ENCODE measurements at regions of chr7 and their contacts with region 1.

Region 1: GRCh38 chr7:149624419-149625339 is 127.1 kb upstream of the ZNF746 start:
- DNase-seq: peak; percentile 89 to 92 (median 92)
- H3K4me3 ChIP-seq: peak overlapping the region; percentile 72 to 76
- H3K4me3 Mint-ChIP-seq: peak overlapping the region; percentile 85 to 97 (median 92)
- H3K27ac ChIP-seq: peak overlapping the region; percentile 66
- H3K27ac Mint-ChIP-seq: peak overlapping the region; percentile 77 to 96 (median 88)
- H3K4me1 ChIP-seq: peaks cover 41% of the 10 kb centered on the region
- H3K4me1 Mint-ChIP-seq: peaks cover 23 to 54% (median 36%) of the 10 kb centered on the region in 4 donors
- H3K27me3 ChIP-seq: peaks cover 4% of the 10 kb centered on the region
- H3K27me3 Mint-ChIP-seq: peaks cover 5 to 10% of the 10 kb centered on the region in 2 donors

Region 2: GRCh38 chr7:149449897-149450296 is 174.8 kb before region 1 on chr7:
- CTCF ChIA-PET with region 1: no interaction called
- POLR2A ChIA-PET with region 1: no interaction called
- intact Hi-C with region 1: no loop called
- DNase-seq: no peak
- H3K4me3 ChIP-seq: no peak overlapping the region
- H3K4me3 Mint-ChIP-seq: no peak overlapping the region
- H3K27ac ChIP-seq: no peak overlapping the region
- H3K27ac Mint-ChIP-seq: no peak overlapping the region
- H3K4me1 ChIP-seq: no peaks in the 10 kb centered on the region
- H3K4me1 Mint-ChIP-seq: peaks cover 4 to 10% (median 6%) of the 10 kb centered on the region in 4 donors
- H3K27me3 ChIP-seq: no peaks in the 10 kb centered on the region
- H3K27me3 Mint-ChIP-seq: no peaks in the 10 kb centered on the region

Region 3: DNA sequence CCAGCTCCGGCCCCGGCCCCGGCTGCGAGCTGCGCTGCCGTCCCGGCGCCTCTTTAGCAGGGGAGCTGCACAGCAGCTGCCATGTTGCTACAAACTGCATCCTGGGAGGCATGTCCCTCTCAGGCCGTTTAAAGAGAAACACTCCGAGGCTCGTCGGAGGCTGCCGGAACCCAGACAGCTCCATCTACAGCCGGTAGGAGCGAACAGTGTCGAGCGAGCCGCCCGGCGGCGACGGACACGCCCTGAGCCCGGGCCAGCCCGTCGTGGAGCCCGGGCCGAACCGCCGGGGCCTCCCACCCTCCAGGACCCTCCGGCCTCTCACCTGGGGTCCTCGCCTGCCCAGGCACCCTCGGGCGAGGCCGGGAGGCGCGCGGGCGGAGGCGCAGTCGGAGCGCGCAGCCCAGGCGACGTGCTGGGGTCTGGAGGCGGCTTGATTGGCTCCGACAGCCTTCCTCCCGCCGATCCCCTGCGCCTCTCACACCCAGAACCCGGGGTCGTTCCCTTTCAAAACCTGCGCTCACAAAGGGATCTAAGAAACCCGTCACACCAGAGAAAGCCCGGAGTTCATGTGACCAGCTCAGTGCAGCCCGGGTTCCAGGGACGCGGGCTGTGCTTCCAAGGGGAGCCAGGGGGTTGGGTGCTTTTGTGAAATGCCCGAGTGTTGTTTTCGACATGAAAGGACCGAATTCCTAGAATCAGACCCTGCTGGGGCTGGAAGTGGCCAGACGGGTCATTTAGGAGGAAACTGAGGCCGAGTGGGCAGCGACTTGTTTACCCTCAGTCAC is 164.0 kb before region 1 on chr7 and contains the start of gene ZNF777:
- CTCF ChIA-PET with region 1: interaction called, 5 read pairs
- POLR2A ChIA-PET with region 1: interaction called, 7 read pairs
- intact Hi-C with region 1: loop called (anchors 1 kb)
- DNase-seq: peak; percentile 80 to 88 (median 83)
- H3K4me3 ChIP-seq: peak within 1 kb of the TSS; percentile 73 to 74
- H3K4me3 Mint-ChIP-seq: peak within 1 kb of the TSS; percentile 86 to 91 (median 88)
- H3K27ac ChIP-seq: peak within 1 kb of the TSS; percentile 62
- H3K27ac Mint-ChIP-seq: peak within 1 kb of the TSS; percentile 48 to 90 (median 87)
- H3K4me1 ChIP-seq: peaks cover 24% of the 10 kb centered on the region
- H3K4me1 Mint-ChIP-seq: peaks cover 16 to 33% (median 28%) of the 10 kb centered on the region in 4 donors
- H3K27me3 ChIP-seq: peaks cover 6% of the 10 kb centered on the region
- H3K27me3 Mint-ChIP-seq: peaks cover 0 to 3% of the 10 kb centered on the region in 2 donors
- total RNA-seq, gene ZNF777: 15.9 to 16.8 TPM

Region 4: GRCh38 chr7:149580328-149580727 is 44.4 kb before region 1 on chr7:
- CTCF ChIA-PET with region 1: interaction called, 4 read pairs
- POLR2A ChIA-PET with region 1: no interaction called
- intact Hi-C with region 1: loop called (anchors 2 kb)
- DNase-seq: no peak
- H3K4me3 ChIP-seq: no peak overlapping the region
- H3K4me3 Mint-ChIP-seq: peak overlapping the region in 3 of 8 donors; percentile 25 to 77 (median 48)
- H3K27ac ChIP-seq: no peak overlapping the region
- H3K27ac Mint-ChIP-seq: peak overlapping the region in 6 of 7 donors; percentile 46 to 91 (median 72)
- H3K4me1 ChIP-seq: no peaks in the 10 kb centered on the region
- H3K4me1 Mint-ChIP-seq: peaks cover 13 to 23% (median 19%) of the 10 kb centered on the region in 4 donors
- H3K27me3 ChIP-seq: no peaks in the 10 kb centered on the region
- H3K27me3 Mint-ChIP-seq: no peaks in the 10 kb centered on the region

Region 5: DNA sequence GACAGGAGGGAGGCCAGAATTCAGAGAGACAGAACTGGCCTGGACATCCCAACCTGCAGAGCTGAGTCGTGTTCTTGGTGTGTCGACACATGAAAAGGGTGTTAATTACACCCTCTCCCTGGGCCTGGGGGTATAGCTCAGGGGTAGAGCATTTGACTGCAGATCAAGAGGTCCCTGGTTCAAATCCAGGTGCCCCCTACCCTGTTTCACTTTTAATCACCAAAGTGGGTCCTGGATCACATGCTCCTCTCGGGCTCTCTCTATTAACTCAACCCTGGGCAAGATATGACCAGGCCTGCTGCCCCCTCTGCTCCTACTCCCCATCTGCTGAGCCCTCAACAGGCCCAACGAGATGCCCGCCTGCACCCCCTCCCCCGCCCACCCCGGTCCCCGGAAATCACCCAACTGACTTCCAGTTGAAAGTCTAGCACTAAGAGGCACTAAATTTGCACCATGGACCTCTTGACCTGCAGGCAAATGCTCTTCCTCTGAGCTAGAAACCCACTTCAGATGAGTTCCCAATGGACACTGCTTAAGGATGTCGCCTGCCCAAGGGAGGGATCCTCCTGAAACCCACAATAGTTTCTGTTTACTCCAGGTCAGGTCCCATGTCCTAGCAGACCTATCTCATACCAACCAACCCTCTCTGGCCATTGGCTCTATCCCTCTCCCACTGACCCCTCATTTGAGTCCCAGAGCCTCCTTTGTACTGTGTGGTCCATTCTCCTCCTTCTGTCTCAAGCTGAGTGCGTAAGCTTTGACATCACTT is 11.1 kb after region 1 on chr7:
- CTCF ChIA-PET with region 1: interaction called, 12 read pairs
- POLR2A ChIA-PET with region 1: no interaction called
- intact Hi-C with region 1: no loop called
- DNase-seq: no peak
- H3K4me3 ChIP-seq: no peak overlapping the region
- H3K4me3 Mint-ChIP-seq: no peak overlapping the region
- H3K27ac ChIP-seq: no peak overlapping the region
- H3K27ac Mint-ChIP-seq: no peak overlapping the region
- H3K4me1 ChIP-seq: no peaks in the 10 kb centered on the region
- H3K4me1 Mint-ChIP-seq: no peaks in the 10 kb centered on the region
- H3K27me3 ChIP-seq: no peaks in the 10 kb centered on the region
- H3K27me3 Mint-ChIP-seq: peaks cover 7 to 12% of the 10 kb centered on the region in 2 donors

Measured in CD4-positive, alpha-beta memory T cell (primary cell).